ENCODE measurements at regions of chr2 and their contacts with region 1.

Region 1: DNA sequence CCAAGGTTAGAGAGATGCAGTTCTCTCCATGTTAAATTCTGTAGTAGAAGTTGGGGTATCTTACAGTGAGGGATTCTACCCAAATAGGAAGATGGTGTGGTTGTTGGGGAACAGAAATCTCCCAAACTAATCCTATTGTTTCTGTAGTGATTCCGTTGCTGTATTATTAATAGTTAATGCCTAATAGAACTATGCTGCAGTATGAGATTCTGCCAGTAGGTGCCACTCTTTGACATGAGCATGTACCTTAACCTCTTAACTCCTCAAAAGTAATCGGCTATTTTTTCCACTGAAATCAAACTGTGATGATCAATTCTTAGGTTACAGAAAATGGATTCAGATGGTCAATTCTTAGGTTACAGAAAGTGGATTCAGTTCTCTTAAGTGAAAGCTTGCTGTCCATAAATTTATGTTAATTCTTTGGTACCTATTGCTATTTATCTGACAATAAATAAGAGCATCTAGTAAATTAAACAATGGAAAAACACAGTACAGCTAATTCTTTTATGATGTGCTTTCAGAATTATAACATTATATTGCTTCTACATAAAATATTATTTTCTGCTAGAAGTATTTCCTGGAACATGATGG is 97.9 kb upstream of the DLX2 start:
- DNase-seq: peak; percentile 44
- H3K4me3 Mint-ChIP-seq: no peak overlapping the region
- H3K27ac Mint-ChIP-seq: no peak overlapping the region
- H3K4me1 Mint-ChIP-seq: peaks cover 14% of the 10 kb centered on the region
- H3K27me3 Mint-ChIP-seq: peaks cover 3% of the 10 kb centered on the region

Region 2: GRCh38 chr2:172179045-172179701 is 21.4 kb before region 1 on chr2:
- CTCF ChIA-PET with region 1: no interaction called
- intact Hi-C with region 1: loop called (anchors 2 kb)
- DNase-seq: peak; percentile 43
- H3K4me3 Mint-ChIP-seq: no peak overlapping the region
- H3K27ac Mint-ChIP-seq: no peak overlapping the region
- H3K4me1 Mint-ChIP-seq: peaks cover 24% of the 10 kb centered on the region
- H3K27me3 Mint-ChIP-seq: no peaks in the 10 kb centered on the region

Region 3: DNA sequence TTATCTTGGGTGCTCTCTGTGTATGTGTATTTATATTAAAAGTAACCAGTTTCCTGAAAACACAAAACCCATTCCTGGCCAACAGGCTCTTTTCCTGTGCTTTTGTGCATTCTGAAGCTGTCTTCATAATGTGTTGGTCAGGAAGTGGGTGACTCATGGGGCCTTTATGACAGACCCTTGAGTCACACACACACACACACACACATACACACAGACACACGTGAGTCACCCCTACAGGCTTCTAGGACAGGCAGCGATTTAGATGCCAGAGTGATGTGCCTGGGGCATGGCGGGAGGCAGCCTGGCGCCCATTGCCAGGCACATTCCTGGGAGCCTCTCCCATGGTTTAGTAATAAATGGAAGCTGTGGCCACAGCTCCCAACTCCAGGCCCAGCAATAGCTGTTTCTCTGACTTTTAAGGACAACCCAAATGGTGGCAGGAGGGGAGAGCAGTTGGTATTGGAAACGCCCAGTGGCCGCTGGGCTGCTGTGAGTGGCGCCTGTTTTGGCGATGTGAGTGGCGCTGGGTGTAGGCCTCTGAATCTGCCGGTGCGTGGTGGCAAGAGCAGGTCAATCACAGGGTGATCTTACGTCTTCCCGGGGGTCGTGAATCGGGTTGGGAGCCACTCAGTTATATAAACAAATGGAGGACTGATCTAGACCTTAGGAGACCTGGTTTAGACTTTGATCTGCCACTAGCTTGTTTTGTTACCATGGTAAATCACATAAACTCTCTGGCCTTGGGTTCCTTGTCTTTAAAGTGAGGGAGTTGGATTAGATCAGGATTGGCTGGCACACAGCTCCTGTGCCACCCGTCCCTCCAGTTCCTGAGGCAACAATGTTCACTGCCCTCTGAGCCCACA is 52.8 kb after region 1 on chr2:
- CTCF ChIA-PET with region 1: no interaction called
- intact Hi-C with region 1: loop called (anchors 2 kb)
- DNase-seq: peak; percentile 77
- H3K4me3 Mint-ChIP-seq: no peak overlapping the region
- H3K27ac Mint-ChIP-seq: peak overlapping the region; percentile 65
- H3K4me1 Mint-ChIP-seq: peaks cover 36% of the 10 kb centered on the region
- H3K27me3 Mint-ChIP-seq: no peaks in the 10 kb centered on the region

Region 4: DNA sequence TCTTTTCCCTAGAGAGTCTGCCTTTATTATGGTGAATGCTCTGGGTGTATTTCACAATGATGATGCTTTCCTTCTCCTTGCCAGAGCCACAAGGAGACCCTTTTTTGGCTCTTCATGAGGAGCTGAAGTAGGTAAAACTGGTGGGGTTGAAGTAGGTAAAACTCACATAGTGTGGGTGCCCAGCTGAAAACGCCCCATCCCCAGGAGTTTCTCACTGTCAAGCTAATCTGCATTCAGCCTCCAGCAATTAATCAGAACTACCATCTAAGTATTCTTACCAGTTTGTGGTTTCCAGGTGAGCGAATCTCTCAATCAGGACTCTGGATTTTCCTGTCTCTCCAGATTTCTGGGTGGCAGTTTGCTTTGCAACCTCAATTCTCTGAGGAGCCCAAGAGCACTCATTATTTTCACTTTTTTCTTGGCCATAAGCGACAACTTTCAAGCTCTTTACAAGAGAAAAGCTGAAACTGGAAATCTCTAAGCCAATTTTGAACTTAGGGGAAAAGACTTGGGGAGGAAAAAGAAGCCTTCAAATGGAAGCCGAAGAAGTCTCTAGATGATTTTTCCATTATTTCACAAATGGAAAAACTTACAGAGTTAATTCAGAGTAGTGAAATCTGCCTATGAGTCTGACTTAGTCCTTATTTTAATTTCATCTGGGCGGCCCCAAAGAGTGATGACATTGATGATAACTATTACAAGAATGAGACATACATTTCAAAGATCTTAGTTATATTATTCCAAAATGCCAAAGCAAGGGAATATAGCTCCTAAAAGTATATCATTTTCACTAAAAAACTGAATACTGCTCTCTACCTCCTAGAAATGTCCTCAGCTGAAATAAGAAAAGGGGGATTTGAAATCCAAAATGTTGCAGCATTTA is 753.6 kb after region 1 on chr2:
- CTCF ChIA-PET with region 1: no interaction called
- intact Hi-C with region 1: no loop called
- DNase-seq: no peak
- H3K4me3 Mint-ChIP-seq: no peak overlapping the region
- H3K27ac Mint-ChIP-seq: no peak overlapping the region
- H3K4me1 Mint-ChIP-seq: peaks cover 3% of the 10 kb centered on the region
- H3K27me3 Mint-ChIP-seq: no peaks in the 10 kb centered on the region

Measured in activated naive CD4-positive, alpha-beta T cell treated with anti-CD3 and anti-CD28 coated beads for 36 hours (primary cell).